Endothelial cell of umbilical vein (primary cell): ENCODE measurements at regions of chr16 and their contacts with region 1.

Region 1: DNA sequence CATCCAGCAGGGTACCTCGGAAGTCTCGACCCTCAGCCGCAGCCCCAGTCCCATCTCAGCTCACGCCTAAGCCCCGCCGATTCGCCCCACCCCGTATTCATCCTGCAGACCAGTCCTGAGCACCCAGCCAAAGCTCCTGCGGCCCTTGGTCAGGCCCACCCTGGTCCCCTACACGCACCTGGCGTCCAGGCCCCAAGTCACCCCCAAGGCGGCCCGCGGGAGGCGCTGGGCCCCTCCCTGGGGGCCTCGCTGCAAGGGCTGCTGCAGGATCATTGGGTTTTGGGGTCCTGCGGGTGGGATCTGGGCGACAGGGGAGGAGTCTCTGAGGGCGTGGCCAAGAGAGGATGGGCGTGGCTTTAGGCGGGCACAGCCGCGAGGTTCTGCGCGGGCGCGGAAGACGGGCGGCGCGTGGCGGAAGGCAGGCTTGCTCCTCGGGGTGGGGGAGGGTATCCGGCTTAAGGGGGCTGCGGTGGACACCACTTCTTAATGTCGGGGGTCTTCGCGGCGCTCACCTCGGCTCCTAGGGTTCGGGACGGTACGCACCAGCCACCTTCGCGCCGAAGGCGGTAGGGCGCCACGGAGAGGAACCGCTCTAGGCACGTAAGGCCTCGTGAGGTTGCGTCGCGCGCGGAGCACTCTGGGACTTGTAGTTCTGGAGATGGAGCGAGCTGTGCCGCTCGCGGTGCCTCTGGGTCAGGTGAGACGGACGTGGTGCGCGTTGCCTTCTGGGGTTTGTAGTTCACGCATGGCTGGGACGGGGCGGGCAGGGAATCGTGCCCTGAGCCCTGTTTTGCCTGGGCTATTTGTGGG is at the starts of genes HCFC1R1 and THOC6:
- DNase-seq: peak; percentile 98
- H3K4me3 ChIP-seq: peak within 1 kb of the TSS; percentile 0 to 61 (median 53)
- H3K27ac ChIP-seq: peak within 1 kb of the TSS; percentile 98
- H3K4me1 ChIP-seq: peaks cover 18% of the 10 kb centered on the region
- H3K27me3 ChIP-seq: peaks cover under 1 to 2% of the 10 kb centered on the region in 2 experiments
- CTCF ChIP-seq: no peak
- POLR2A ChIP-seq: peak; percentile 62
- total RNA-seq, gene HCFC1R1: 25.8 and 28.7 TPM in 2 replicates
- total RNA-seq, gene THOC6: 23.9 and 24.1 TPM in 2 replicates

Region 2: DNA sequence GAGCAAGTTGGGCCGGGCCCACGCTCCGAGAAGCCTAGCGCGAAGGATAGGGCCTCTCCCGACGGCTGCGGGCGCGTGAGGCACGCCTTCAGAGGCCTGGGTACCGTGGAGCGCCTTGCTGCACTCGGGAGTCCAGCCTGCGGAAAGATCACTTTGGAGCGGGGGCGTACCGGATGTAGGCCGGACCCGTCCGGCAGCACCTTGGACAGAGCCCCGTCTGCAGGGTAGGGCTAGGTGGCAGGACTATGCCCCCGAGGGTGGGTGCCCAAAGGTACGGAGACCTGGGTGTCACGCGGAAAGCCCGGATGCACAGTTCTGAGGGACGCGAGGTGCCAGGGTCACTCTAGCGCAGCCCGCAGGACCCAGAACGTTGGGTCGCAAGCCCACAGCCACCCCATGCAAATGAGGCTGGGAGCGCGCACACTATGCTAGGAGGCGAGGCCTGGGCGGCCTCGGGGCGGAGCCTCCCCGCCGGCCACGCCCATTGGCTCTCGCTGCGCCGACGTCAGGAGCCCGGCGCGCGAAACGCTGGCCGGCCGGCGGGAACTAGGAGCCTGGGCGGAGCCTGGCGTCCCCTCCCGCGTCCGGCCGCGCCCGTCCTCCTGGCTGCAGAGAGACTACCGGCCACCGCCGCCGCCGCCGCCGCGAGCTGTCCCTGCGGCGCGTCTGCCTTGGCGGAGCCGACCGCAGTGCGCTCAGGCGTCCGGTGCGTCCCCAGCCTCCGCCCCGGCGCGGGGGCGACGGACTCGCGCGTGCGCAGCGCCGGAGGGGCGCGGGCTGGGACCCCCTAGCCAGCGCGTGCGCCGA is 54.9 kb before region 1 on chr16 and contains the start of gene PAQR4:
- CTCF ChIA-PET with region 1: interaction called, 10 read pairs
- POLR2A ChIA-PET with region 1: no interaction called
- dilution Hi-C with region 1: no loop called
- intact Hi-C with region 1: loop called (anchors 1 kb)
- DNase-seq: peak; percentile 88
- H3K4me3 ChIP-seq: peak within 1 kb of the TSS; percentile 58 to 94 (median 61)
- H3K27ac ChIP-seq: peak within 1 kb of the TSS; percentile 20
- H3K4me1 ChIP-seq: peaks cover 16% of the 10 kb centered on the region
- H3K27me3 ChIP-seq: peaks cover 18 to 39% of the 10 kb centered on the region in 2 experiments
- CTCF ChIP-seq: no peak
- POLR2A ChIP-seq: no peak
- total RNA-seq, gene PAQR4: 25.4 and 31.2 TPM in 2 replicates

Region 3: DNA sequence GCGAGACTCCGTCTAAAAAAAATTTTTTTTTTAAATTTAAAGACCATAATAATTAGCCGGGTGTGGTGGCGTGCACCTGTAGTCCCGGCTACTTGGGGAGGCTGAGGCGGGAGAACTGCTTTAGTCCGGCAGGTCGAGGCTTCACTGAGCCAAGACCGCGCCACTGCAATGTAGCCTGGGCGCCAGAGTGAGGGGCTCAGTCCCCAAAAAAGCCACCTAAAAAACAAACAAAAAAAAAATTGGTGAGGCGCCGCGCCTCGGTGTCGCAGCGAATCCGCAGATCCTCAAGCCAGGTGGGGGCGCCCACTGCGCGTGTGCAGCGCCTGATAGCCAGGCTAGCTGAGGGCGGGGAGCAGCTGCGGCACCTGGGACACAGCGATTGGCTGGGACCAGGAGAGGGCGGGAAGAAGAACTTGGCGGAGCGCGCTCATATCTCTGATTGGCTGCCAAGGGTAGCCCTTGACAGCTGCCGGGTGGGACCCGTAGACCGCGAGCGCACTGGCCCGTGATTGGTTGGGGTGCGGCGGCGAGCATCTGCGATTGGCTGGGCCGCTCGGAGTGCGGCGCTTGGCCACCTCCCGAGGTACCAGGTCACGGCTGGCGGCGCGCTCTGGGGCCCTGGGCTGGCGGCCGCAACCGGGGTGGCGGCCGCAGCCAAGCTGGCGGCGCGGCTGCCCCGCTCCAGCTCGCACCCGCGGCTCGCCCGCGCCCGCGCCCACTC is 20.1 kb before region 1 on chr16:
- CTCF ChIA-PET with region 1: interaction called, 97 read pairs
- POLR2A ChIA-PET with region 1: interaction called, 16 read pairs
- dilution Hi-C with region 1: no loop called
- intact Hi-C with region 1: loop called (anchors 1 kb)
- DNase-seq: peak; percentile 99
- H3K4me3 ChIP-seq: no peak overlapping the region
- H3K27ac ChIP-seq: no peak overlapping the region
- H3K4me1 ChIP-seq: peaks cover 16% of the 10 kb centered on the region
- H3K27me3 ChIP-seq: no peaks in the 10 kb centered on the region
- CTCF ChIP-seq: peak; percentile 19 to 34
- POLR2A ChIP-seq: no peak

Region 4: GRCh38 chr16:3045357-3045728 is 21.5 kb after region 1 on chr16:
- CTCF ChIA-PET with region 1: interaction called, 200 read pairs
- POLR2A ChIA-PET with region 1: interaction called, 4 read pairs
- dilution Hi-C with region 1: no loop called
- intact Hi-C with region 1: no loop called
- DNase-seq: peak; percentile 22
- H3K4me3 ChIP-seq: peak overlapping the region in 1 of 3 experiments; percentile 37
- H3K27ac ChIP-seq: no peak overlapping the region
- H3K4me1 ChIP-seq: peaks cover 2% of the 10 kb centered on the region
- H3K27me3 ChIP-seq: peaks cover 18 to 27% of the 10 kb centered on the region in 2 experiments
- CTCF ChIP-seq: no peak
- POLR2A ChIP-seq: no peak

Region 5: GRCh38 chr16:3094289-3095027 is 70.6 kb after region 1 on chr16:
- CTCF ChIA-PET with region 1: no interaction called
- POLR2A ChIA-PET with region 1: no interaction called
- dilution Hi-C with region 1: no loop called
- intact Hi-C with region 1: no loop called
- DNase-seq: peak; percentile 74
- H3K4me3 ChIP-seq: no peak overlapping the region
- H3K27ac ChIP-seq: no peak overlapping the region
- H3K4me1 ChIP-seq: peaks cover under 1% of the 10 kb centered on the region
- H3K27me3 ChIP-seq: peaks cover 0 to 2% of the 10 kb centered on the region in 2 experiments
- CTCF ChIP-seq: peak; percentile 61 to 70
- POLR2A ChIP-seq: no peak

Region 6: GRCh38 chr16:3348547-3349167 is 324.8 kb after region 1 on chr16:
- CTCF ChIA-PET with region 1: no interaction called
- POLR2A ChIA-PET with region 1: no interaction called
- dilution Hi-C with region 1: no loop called
- intact Hi-C with region 1: no loop called
- DNase-seq: no peak
- H3K4me3 ChIP-seq: no peak overlapping the region
- H3K27ac ChIP-seq: no peak overlapping the region
- H3K4me1 ChIP-seq: no peaks in the 10 kb centered on the region
- H3K27me3 ChIP-seq: peaks cover 0 to 3% of the 10 kb centered on the region in 2 experiments
- CTCF ChIP-seq: no peak
- POLR2A ChIP-seq: no peak